Activated CD4-positive, alpha-beta memory T cell treated with anti-CD3 and anti-CD28 coated beads for 36 hours (primary cell): ENCODE measurements at regions of chr12 and their contacts with region 1.

Region 1: GRCh38 chr12:103548622-103549601 is 38.2 kb upstream of the STAB2 start:
- DNase-seq: peak; percentile 81
- H3K4me3 Mint-ChIP-seq: no peak overlapping the region
- H3K27ac Mint-ChIP-seq: peak overlapping the region; percentile 44
- H3K4me1 Mint-ChIP-seq: peaks cover 11% of the 10 kb centered on the region
- H3K27me3 Mint-ChIP-seq: peaks cover 18% of the 10 kb centered on the region

Region 2: GRCh38 chr12:102879144-102879763 is 669.7 kb before region 1 on chr12:
- CTCF ChIA-PET with region 1: interaction called, 31 read pairs
- POLR2A ChIA-PET with region 1: no interaction called
- intact Hi-C with region 1: loop called (anchors 1 kb)
- DNase-seq: peak; percentile 47
- H3K4me3 Mint-ChIP-seq: no peak overlapping the region
- H3K27ac Mint-ChIP-seq: no peak overlapping the region
- H3K4me1 Mint-ChIP-seq: no peaks in the 10 kb centered on the region
- H3K27me3 Mint-ChIP-seq: peaks cover 11% of the 10 kb centered on the region

Region 3: DNA sequence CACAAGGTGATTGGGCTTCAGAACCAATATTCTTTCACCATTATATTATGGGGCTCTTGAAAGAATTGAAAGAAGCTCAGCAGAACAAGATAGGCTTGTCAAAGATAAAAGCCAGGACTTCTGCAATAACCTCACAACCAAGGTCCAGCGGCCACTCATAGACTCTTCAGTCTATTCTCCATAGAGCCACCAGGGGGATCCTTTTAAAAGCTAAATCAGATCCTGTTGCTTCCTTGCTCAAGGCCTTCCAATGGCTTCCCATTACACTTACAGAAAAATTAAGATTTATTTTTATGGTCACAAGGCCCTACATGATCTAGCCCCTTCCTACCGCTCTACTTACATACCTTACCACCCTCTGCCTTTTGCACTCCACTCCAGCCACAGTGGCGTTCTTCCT is 222.7 kb before region 1 on chr12:
- CTCF ChIA-PET with region 1: no interaction called
- POLR2A ChIA-PET with region 1: no interaction called
- intact Hi-C with region 1: loop called (anchors 5 kb)
- DNase-seq: no peak
- H3K4me3 Mint-ChIP-seq: no peak overlapping the region
- H3K27ac Mint-ChIP-seq: no peak overlapping the region
- H3K4me1 Mint-ChIP-seq: no peaks in the 10 kb centered on the region
- H3K27me3 Mint-ChIP-seq: no peaks in the 10 kb centered on the region

Region 4: GRCh38 chr12:103503977-103504376 is 44.9 kb before region 1 on chr12:
- CTCF ChIA-PET with region 1: interaction called, 5 read pairs
- POLR2A ChIA-PET with region 1: no interaction called
- intact Hi-C with region 1: loop called (anchors 1 kb)
- DNase-seq: peak; percentile 60
- H3K4me3 Mint-ChIP-seq: no peak overlapping the region
- H3K27ac Mint-ChIP-seq: no peak overlapping the region
- H3K4me1 Mint-ChIP-seq: peaks cover 28% of the 10 kb centered on the region
- H3K27me3 Mint-ChIP-seq: peaks cover 5% of the 10 kb centered on the region

Region 5: DNA sequence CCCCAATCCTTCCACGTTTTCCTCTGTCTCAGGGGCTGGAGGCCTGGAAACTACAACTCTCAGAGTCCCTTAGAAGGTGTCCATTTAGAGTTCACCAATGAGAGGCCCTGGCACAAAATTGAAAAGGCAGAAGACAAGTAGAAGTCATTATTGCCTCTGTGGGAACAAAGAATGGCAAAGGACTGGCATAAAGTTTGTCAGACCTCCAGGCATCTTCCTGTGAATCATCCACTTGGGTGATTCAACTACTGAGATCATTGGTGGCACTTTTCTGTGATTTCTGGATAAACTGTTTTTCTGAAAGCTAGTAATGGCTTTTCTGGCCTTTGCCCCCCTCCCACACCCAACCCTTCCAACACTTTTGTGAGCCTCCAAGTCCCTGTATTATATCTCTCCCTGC is 10.5 kb before region 1 on chr12:
- CTCF ChIA-PET with region 1: interaction called, 12 read pairs
- POLR2A ChIA-PET with region 1: no interaction called
- intact Hi-C with region 1: no loop called
- DNase-seq: peak; percentile 14
- H3K4me3 Mint-ChIP-seq: no peak overlapping the region
- H3K27ac Mint-ChIP-seq: no peak overlapping the region
- H3K4me1 Mint-ChIP-seq: peaks cover 11% of the 10 kb centered on the region
- H3K27me3 Mint-ChIP-seq: peaks cover 3% of the 10 kb centered on the region